Activated T-helper 1 cell treated with anti-CD3 and anti-CD28 coated beads, Interleukin-12 subunit alpha, Interleukin-12 subunit beta, Interleukin-2, Interleukin-4 antibody, amounts not matched to agents 30 ng/mL and 10 ng/mL and 1 ng/mL, durations not matched to agents 14 hours and 24 hours and 36 hours (primary cell): ENCODE measurements at regions of chr1 and their contacts with region 1.

Region 1: DNA sequence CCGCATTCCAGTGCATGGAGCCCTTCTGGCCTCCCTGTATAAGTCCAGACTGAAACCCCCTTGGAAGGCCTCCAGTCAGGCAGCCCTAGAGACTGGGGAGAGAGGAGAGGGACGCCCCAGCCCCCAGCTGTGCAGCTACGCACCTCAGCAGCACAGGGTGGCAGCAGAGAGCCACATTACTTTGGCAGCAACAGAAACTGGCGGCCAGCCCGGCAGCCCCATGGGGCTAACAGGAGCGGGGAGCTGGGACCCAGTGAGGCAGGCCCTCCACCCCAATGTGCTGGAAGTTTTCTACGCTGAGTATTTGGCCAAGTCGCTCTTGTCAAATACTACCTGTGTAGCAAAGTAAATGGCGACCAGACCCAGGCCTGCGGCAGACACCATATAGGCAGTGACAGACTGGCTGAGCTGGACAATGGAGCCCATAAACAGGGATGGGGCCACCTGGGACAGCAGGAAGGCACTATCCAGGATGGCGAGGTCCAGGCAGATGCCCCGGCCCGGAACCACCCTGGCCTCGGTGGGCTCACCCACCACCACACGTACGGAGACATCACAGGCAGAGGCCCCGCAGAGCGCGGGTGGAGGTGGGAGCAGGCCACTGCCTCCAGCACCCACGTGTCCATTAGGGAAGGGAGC is 21.2 kb downstream of the SLC45A3 start:
- DNase-seq: peak; percentile 66
- H3K4me3 Mint-ChIP-seq: no peak overlapping the region
- H3K27ac Mint-ChIP-seq: no peak overlapping the region
- H3K4me1 Mint-ChIP-seq: no peaks in the 10 kb centered on the region
- H3K27me3 Mint-ChIP-seq: peaks cover 15% of the 10 kb centered on the region

Region 2: GRCh38 chr1:205344066-205344928 is 314.8 kb before region 1 on chr1:
- intact Hi-C with region 1: no loop called
- DNase-seq: peak; percentile 19
- H3K4me3 Mint-ChIP-seq: peak overlapping the region; percentile 53
- H3K27ac Mint-ChIP-seq: no peak overlapping the region
- H3K4me1 Mint-ChIP-seq: peaks cover 18% of the 10 kb centered on the region
- H3K27me3 Mint-ChIP-seq: peaks cover 48% of the 10 kb centered on the region

Region 3: DNA sequence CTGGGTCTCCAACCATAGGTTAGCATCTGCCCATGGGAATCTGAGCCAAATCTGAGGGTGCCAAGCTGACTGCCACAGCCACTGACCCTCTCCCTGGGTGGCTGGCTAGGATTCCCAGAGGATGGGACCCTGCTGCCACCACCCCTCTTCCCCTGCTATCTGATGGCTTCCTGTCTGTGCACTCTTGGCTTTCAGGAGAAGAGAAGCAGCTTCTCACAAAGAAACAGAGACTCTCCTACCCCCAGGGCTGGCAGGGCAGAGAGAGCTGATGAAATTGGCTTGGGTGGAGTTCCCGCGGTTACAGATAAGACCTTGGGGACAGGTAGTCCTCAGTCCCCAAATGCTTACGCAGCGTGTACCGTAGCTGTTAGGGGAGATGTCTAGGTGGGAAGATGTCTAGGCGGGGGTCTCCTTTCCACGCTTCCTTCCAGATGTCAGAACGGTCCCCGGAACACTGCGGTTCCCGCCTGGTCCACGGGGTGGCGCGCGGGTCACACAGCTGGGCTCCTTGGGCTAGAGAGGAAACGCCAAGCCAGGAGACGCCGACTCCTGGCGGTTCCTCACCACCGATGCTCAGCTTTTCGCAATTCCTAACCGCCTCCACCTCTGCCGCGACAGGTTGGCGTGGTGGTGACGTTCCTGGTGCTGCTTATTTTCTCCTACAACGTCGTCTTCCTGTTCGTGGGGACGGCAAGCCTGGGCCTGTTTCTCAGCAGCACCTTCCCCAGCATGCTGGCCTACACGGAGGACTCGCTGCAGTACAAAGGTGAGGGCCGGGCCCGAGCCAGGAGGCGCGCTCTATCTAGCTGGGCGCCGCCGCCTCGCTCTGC is 67.3 kb before region 1 on chr1:
- intact Hi-C with region 1: loop called (anchors 1 kb)
- DNase-seq: peak; percentile 82
- H3K4me3 Mint-ChIP-seq: peak overlapping the region; percentile 78
- H3K27ac Mint-ChIP-seq: peak overlapping the region; percentile 77
- H3K4me1 Mint-ChIP-seq: peaks cover 22% of the 10 kb centered on the region
- H3K27me3 Mint-ChIP-seq: peaks cover 3% of the 10 kb centered on the region

Region 4: GRCh38 chr1:205775015-205775716 is 116.1 kb after region 1 on chr1 and contains the start of gene RAB29:
- intact Hi-C with region 1: loop called (anchors 2 kb)
- DNase-seq: peak; percentile 82
- H3K4me3 Mint-ChIP-seq: peak within 1 kb of the TSS; percentile 88
- H3K27ac Mint-ChIP-seq: peak within 1 kb of the TSS; percentile 93
- H3K4me1 Mint-ChIP-seq: peaks cover 59% of the 10 kb centered on the region
- H3K27me3 Mint-ChIP-seq: no peaks in the 10 kb centered on the region
- total RNA-seq, gene RAB29: 37.2 and 38.1 TPM in 2 replicates

Region 5: GRCh38 chr1:205919026-205919746 is 260.1 kb after region 1 on chr1:
- intact Hi-C with region 1: loop called (anchors 5 kb)
- DNase-seq: peak; percentile 56
- H3K4me3 Mint-ChIP-seq: no peak overlapping the region
- H3K27ac Mint-ChIP-seq: no peak overlapping the region
- H3K4me1 Mint-ChIP-seq: no peaks in the 10 kb centered on the region
- H3K27me3 Mint-ChIP-seq: peaks cover 14% of the 10 kb centered on the region

Region 6: DNA sequence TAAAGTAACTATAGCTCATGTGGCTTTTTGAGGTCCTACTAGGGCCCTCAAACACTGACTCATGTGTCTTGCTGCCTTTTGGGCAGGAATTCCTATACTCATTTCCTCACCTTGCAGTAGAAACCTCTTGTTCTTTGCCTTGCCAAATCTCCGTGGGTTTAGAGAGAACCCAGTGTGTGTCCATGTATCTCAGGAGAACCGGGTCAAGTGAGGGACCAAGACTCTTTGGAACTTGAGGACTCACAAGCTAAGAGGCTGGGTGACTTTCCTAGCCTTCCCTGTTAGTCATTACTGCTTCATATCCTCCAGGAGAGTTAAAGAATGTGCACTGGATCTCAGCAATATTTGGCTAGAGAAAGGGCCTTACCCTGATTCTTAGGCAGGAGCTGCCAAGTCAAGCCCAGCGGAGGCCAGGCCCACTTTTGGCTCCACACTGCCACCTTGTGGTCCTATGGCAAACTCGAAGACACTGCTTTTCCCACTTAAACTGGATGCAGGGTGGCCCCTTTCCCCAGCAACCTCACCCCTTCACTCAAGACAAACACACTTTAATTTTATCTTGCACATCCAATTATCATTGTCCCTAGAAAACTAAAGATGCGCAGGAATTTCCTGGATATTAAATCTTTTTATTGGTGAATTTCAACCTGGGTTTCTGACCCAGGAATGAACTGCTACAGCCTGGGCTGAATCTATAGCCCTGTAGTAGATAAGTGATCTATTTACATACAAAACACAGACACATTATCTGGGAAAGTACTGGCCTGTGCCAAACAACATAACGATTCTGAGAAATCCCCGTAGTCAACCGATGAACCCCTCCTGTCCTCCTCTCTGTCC is 447.5 kb after region 1 on chr1:
- intact Hi-C with region 1: loop called (anchors 1 kb)
- DNase-seq: peak; percentile 66
- H3K4me3 Mint-ChIP-seq: no peak overlapping the region
- H3K27ac Mint-ChIP-seq: no peak overlapping the region
- H3K4me1 Mint-ChIP-seq: no peaks in the 10 kb centered on the region
- H3K27me3 Mint-ChIP-seq: peaks cover 28% of the 10 kb centered on the region